A673 (cell line): ENCODE measurements at regions of chr6 and their contacts with region 1.

Region 1: DNA sequence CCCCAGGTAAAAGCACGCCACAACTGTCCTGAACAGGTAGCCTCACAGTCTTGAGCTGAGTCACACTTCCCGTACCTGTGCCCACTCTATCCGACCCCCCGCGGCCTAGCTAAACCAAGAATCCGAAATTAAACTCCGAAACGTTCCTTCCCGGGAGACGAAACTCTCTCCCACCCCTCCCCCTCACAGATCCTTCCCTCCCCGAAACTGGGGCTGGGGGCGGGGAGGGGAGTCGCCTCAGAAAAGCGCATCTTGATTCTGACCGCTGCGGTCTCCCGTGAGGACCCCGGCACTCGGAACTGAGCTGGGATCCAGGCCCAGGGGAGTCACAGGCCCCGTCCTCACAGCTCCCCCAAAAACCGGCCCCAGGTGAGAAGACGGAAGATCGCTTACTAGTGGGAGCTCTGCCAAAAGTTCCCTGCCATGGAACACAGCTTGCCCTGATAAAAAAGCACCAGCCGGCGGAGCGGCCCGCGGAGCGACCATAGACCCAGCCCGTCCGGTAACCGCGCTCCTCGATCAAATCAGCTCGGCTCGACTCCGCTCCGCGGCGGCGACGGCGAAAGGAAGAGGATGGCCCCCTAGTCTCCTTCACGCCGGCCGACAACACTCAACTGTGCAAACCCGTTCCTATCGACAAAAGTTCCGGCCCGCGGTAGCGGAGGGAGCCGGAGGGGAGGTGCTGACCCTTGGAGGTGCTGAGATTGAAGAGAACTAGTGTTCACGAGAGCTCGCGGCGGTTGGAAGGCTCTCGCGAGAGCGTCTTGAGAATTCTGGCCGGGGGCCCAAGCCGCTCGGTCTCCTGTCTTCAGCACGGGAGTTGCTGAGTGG is at the start of gene CCNC:
- DNase-seq: peak; percentile 98
- H3K4me3 ChIP-seq: peak within 1 kb of the TSS; percentile 79
- H3K27ac ChIP-seq: peak within 1 kb of the TSS; percentile 89
- H3K4me1 ChIP-seq: peaks cover 22% of the 10 kb centered on the region
- H3K27me3 ChIP-seq: no peaks in the 10 kb centered on the region
- CTCF ChIP-seq: no peak
- total RNA-seq, gene CCNC: 90.2 and 99.1 TPM in 2 replicates

Region 2: GRCh38 chr6:99384507-99384906 is 183.8 kb before region 1 on chr6:
- CTCF ChIA-PET with region 1: no interaction called
- POLR2A ChIA-PET with region 1: no interaction called
- intact Hi-C with region 1: no loop called
- DNase-seq: no peak
- H3K4me3 ChIP-seq: no peak overlapping the region
- H3K27ac ChIP-seq: no peak overlapping the region
- H3K4me1 ChIP-seq: no peaks in the 10 kb centered on the region
- H3K27me3 ChIP-seq: no peaks in the 10 kb centered on the region
- CTCF ChIP-seq: no peak

Region 3: GRCh38 chr6:99520855-99521632 is 47.3 kb before region 1 on chr6:
- CTCF ChIA-PET with region 1: no interaction called
- POLR2A ChIA-PET with region 1: no interaction called
- intact Hi-C with region 1: loop called (anchors 2 kb)
- DNase-seq: peak; percentile 90
- H3K4me3 ChIP-seq: peak overlapping the region; percentile 85
- H3K27ac ChIP-seq: peak overlapping the region; percentile 88
- H3K4me1 ChIP-seq: peaks cover 27% of the 10 kb centered on the region
- H3K27me3 ChIP-seq: no peaks in the 10 kb centered on the region
- CTCF ChIP-seq: peak; percentile 81

Region 4: GRCh38 chr6:100152201-100152600 is 583.9 kb after region 1 on chr6:
- CTCF ChIA-PET with region 1: no interaction called
- POLR2A ChIA-PET with region 1: no interaction called
- intact Hi-C with region 1: no loop called
- DNase-seq: no peak
- H3K4me3 ChIP-seq: no peak overlapping the region
- H3K27ac ChIP-seq: no peak overlapping the region
- H3K4me1 ChIP-seq: no peaks in the 10 kb centered on the region
- H3K27me3 ChIP-seq: no peaks in the 10 kb centered on the region
- CTCF ChIP-seq: no peak